MCF 10A (cell line): ENCODE measurements at regions of chr4 and their contacts with region 1.

Region 1: DNA sequence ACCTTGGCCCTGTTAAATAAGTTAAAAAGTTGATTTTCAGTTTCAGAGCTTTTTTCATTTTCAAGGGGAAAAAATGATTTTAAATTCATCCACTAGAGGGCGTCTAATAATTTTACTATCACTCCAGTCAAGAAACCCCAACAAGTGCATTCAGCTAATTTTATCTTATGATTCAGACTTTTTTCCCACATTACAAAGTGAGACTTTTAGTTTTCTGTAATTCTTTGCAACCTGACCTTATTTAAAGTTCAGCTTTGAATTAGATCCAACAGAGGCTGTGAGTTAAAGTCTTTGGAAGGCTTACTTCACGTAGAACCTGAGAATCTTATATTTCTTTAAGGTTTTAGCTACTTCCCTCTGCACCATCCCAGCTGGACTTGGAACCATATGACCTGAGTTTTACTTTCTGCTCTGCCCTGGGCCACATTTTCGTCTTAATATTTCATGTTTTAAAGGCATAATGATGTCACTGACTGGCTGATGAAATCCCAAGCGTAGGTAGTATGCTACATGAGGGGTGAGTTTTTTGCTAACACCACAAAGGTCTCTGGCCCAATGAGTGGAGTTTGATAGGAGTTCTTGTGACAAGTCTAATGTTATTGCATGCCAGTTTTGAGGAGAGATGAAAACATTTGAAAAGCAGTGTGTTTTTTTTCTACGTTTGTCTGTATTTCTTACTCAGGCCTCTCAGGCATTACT is 7.2 kb downstream of the GNRHR start:
- DNase-seq: peak; percentile 39
- H3K4me3 Mint-ChIP-seq: no peak overlapping the region
- H3K27ac Mint-ChIP-seq: no peak overlapping the region
- H3K4me1 Mint-ChIP-seq: peaks cover 10% of the 10 kb centered on the region
- H3K27me3 Mint-ChIP-seq: no peaks in the 10 kb centered on the region
- CTCF ChIP-seq: peak; percentile 48

Region 2: GRCh38 chr4:67762086-67762485 is 15.1 kb after region 1 on chr4:
- CTCF ChIA-PET with region 1: interaction called, 13 read pairs
- POLR2A ChIA-PET with region 1: no interaction called
- intact Hi-C with region 1: no loop called
- DNase-seq: peak; percentile 2
- H3K4me3 Mint-ChIP-seq: no peak overlapping the region
- H3K27ac Mint-ChIP-seq: no peak overlapping the region
- H3K4me1 Mint-ChIP-seq: peaks cover 18% of the 10 kb centered on the region
- H3K27me3 Mint-ChIP-seq: no peaks in the 10 kb centered on the region
- CTCF ChIP-seq: no peak